Posterior vena cava (tissue), 2 donors: ENCODE measurements at regions of chr15 and their contacts with region 1.

Region 1: DNA sequence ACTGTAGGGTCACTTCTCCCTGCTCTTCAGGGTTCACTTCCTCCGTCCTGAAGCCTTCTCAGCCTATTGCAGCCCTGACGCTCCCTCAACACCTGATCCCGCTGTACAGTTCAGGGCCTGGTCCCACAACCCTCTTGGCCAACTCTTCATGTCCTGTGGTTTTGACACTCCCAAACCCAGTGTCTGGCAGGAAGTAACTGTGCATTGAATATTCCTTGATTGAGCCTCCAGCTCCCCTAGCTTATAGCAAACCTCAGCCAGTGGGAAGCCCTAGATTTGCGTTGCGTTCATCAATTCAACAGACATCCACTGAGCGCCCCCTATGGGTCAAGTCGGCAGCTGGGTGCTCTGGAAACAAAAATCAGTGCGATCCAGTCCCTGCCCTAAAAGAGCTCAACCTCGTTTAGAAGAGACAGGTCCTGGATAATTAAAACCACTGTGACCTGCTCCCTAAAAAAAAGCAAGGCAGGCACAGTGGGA is 13.5 kb downstream of the UBAP1L start:
- DNase-seq: peak; percentile 89

Region 2: GRCh38 chr15:65026756-65027155 is 74.7 kb before region 1 on chr15:
- intact Hi-C with region 1: loop called (anchors 2 to 5 kb)
- DNase-seq: no peak

Region 3: GRCh38 chr15:65032801-65033537 is 68.5 kb before region 1 on chr15:
- intact Hi-C with region 1: loop called in 1 of 2 experiments (anchors 5 kb)
- DNase-seq: peak; percentile 84

Region 4: DNA sequence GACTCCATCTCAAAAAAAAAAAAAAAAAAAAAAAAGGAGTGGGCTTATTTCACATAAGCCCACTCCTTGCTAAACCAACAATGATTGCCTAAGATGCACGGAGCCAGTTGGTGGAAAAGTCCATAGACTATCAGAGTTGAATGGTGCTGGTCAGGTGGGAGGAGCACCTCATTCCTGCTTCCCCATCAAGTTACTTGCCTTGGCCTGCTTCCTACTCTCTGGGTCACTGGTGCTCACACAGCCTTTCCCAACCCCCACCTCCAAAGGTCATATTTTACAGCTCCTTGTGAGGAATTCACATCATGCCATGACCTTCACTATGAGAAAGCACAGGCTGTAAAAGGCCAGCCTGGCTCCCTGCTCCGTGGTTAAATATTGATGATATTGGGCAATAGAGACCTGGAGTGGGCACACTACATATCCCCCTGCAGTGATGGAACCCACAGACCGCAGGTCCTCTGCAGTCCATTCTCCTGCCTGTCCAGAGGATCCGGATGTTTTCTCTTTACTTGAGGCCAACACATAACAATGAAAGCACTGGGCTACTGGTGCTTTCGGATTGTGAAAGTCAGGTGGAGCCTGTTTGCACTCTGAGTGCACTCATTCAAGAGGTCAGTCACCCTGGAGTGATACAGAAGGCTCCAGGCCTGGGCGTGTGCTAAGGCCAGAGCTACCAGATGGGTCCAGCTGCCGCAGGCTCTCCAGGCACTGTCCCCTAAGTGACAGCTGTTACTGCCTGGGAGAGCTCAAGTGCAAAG is 56.5 kb before region 1 on chr15 and contains the start of gene SLC51B:
- intact Hi-C with region 1: no loop called
- DNase-seq: peak; percentile 26
- total RNA-seq, gene SLC51B: not detected

Region 5: DNA sequence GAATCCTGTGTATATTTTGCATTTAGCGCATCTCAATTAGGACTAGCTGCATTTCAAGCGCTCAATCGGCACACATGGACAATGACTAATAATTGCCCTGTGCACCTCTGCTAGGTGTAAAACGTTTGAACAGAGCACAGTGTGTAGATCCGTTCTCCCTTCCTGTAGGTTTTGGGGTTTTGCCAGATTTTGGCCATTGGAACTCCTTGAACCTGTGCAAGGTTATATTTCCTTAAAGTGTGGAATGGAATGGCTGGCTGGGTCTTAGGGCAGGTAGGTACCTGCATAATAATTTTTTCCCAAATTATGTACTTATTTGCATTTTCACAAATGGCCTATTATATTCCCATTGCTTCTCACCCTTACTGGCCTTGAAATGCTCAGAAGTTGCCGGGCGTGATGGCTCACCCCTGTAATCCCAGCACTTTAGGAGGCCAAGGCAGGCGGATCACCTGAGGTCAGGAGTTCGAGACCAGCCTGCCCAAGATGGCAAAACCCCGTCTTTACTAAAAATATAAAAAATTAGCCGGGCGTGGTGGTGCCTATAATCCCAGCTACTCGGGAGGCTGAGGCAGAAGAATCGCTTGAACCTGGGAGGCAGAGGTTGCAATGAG is 203.8 kb after region 1 on chr15:
- intact Hi-C with region 1: no loop called
- DNase-seq: no peak

Region 6: DNA sequence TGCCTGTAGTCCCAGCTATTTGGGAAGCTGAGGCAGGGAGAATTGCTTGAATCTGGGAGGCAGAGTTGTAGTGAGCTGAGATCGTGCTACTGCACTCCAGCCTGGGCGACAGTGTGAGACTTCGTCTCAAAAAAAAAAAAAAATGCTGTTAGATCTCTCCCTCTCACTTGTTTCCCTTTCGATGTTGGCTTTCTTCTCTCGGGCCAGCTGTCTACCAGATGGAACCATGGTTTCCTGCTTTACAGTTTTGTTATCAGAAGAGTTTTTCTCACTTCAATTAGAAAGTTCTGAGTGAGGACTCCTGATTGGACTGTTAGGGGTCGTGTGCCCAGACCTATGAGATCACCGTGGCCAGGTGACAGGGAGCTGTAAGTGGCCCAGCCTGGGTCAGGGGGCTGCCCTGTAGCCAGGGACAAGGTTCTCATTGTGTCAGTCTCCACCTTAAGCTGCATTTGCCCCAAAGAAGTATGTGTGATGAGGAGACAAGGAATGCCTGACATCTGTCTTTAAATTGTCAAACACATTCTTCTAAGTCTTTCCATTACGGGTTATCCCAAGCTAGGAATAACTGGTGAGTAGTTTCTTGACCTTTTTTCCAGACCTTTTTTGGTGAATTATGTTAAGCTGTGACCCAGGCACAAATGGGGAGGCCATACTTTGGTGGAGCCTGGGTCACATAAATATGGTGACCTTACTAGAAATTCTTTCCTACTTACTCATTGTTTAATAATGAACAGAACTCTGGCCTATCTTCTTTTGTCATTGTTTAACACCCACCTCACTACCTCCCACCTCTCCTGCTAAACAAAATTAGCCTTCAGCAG is 1370.9 kb after region 1 on chr15:
- intact Hi-C with region 1: no loop called
- DNase-seq: no peak